ENCODE measurements at regions of chr15 and their contacts with region 1.

Region 1: GRCh38 chr15:51380999-51381795 is 39.7 kb downstream of the GLDN start:
- DNase-seq: peak; percentile 60 to 84
- H3K4me3 ChIP-seq: no peak overlapping the region
- H3K27ac ChIP-seq: no peak overlapping the region
- H3K4me1 ChIP-seq: peaks cover 0 to 23% (median 10%) of the 10 kb centered on the region in 4 donors
- H3K27me3 ChIP-seq: peaks cover 0 to 15% (median 0%) of the 10 kb centered on the region in 3 donors
- CTCF ChIP-seq: peak in 5 of 7 experiments; percentile 74 to 93 (median 79)
- EP300 ChIP-seq: no peak
- POLR2A ChIP-seq: no peak

Region 2: GRCh38 chr15:51162865-51163762 is 218.1 kb before region 1 on chr15:
- intact Hi-C with region 1: loop called (anchors 10 kb)
- DNase-seq: peak; percentile 72 to 88
- H3K4me3 ChIP-seq: no peak overlapping the region
- H3K27ac ChIP-seq: no peak overlapping the region
- H3K4me1 ChIP-seq: peaks cover 0 to 14% (median 3%) of the 10 kb centered on the region in 4 donors
- H3K27me3 ChIP-seq: no peaks in the 10 kb centered on the region
- CTCF ChIP-seq: peak in 5 of 7 experiments; percentile 84 to 99 (median 91)
- EP300 ChIP-seq: no peak
- POLR2A ChIP-seq: no peak

Region 3: DNA sequence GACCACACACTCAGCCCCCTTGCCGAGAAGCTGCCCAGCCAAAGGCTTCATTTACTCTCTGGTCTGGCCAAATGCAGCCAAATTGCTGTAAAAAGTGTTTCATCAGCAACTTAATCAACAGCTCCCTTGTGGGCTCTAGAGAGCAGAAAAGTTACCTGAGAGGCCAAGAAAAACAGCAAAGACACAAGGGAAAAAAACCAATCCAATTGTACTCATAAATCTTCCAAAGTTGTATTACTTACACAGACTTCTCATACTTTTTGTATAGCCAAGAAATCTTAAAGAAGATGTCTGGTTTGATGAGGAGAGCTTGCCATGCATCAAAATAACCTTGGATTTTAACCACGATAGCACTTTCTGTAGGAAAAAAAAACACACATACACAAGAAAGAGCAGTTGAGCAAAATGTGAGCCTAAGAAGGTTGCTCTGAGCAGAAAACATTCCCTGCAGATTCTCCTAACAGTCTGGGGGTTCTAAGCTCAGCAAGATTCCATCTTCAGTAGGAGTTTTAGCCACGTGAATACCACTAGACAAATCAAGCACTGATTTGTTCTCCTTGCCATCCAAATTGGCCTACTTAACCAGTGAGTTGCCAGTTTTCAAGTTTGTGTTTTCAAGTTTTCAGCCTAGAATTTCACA is 162.8 kb before region 1 on chr15:
- intact Hi-C with region 1: loop called (anchors 10 kb)
- DNase-seq: no peak
- H3K4me3 ChIP-seq: no peak overlapping the region
- H3K27ac ChIP-seq: no peak overlapping the region
- H3K4me1 ChIP-seq: no peaks in the 10 kb centered on the region
- H3K27me3 ChIP-seq: no peaks in the 10 kb centered on the region
- CTCF ChIP-seq: no peak
- EP300 ChIP-seq: no peak
- POLR2A ChIP-seq: no peak

Region 4: GRCh38 chr15:51286791-51287190 is 94.4 kb before region 1 on chr15:
- intact Hi-C with region 1: loop called (anchors 5 kb)
- DNase-seq: no peak
- H3K4me3 ChIP-seq: no peak overlapping the region
- H3K27ac ChIP-seq: no peak overlapping the region
- H3K4me1 ChIP-seq: peaks cover 0 to 9% (median 0%) of the 10 kb centered on the region in 4 donors
- H3K27me3 ChIP-seq: no peaks in the 10 kb centered on the region
- CTCF ChIP-seq: no peak
- EP300 ChIP-seq: no peak
- POLR2A ChIP-seq: no peak

Region 5: DNA sequence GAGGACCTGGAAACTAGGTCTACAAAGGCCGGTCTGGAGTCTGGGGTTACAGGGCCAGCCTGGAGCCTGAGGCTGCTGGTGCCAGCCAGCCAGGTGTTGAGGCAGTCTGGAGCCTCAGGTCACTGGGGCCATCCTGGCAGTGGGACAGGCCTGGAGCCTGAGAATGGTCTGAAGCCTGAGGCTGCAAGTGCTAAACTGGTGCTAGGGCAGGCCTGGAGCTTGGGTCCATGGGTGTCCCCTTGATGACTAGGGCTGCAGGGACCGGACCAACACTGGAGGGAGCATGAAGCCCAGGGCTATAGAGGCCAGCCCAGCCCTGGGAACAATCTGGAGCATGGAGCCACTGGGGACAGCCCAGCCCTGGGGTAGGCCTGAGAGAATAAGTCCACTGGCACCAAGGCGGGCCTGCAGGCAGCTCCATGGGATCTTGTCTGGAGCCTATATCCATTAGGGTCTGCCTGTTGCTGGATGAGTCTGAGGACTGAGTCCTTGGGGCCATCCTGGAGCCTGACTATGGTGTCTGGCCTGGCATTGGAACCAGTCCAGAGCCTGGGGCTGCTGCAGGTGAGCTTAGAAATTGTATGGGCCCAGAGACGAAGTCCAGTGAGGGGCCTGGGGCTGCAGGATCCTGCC is 62.2 kb after region 1 on chr15:
- intact Hi-C with region 1: no loop called
- DNase-seq: no peak
- H3K4me3 ChIP-seq: no peak overlapping the region
- H3K27ac ChIP-seq: no peak overlapping the region
- H3K4me1 ChIP-seq: no peaks in the 10 kb centered on the region
- H3K27me3 ChIP-seq: no peaks in the 10 kb centered on the region
- CTCF ChIP-seq: no peak
- EP300 ChIP-seq: no peak
- POLR2A ChIP-seq: no peak

Measured in stomach (tissue), 19 donors.